ENCODE measurements at regions of chr11 and their contacts with region 1.

Region 1: GRCh38 chr11:133927690-133928627 is 28.8 kb downstream of the IGSF9B start:
- DNase-seq: peak; percentile 80
- H3K4me3 Mint-ChIP-seq: peak overlapping the region; percentile 49
- H3K27ac Mint-ChIP-seq: peak overlapping the region; percentile 77
- H3K4me1 Mint-ChIP-seq: peaks cover 31% of the 10 kb centered on the region
- H3K27me3 Mint-ChIP-seq: no peaks in the 10 kb centered on the region

Region 2: GRCh38 chr11:133834682-133835592 is 93.0 kb before region 1 on chr11:
- CTCF ChIA-PET with region 1: no interaction called
- POLR2A ChIA-PET with region 1: no interaction called
- intact Hi-C with region 1: no loop called
- DNase-seq: peak; percentile 68
- H3K4me3 Mint-ChIP-seq: no peak overlapping the region
- H3K27ac Mint-ChIP-seq: no peak overlapping the region
- H3K4me1 Mint-ChIP-seq: peaks cover 10% of the 10 kb centered on the region
- H3K27me3 Mint-ChIP-seq: peaks cover 2% of the 10 kb centered on the region

Region 3: DNA sequence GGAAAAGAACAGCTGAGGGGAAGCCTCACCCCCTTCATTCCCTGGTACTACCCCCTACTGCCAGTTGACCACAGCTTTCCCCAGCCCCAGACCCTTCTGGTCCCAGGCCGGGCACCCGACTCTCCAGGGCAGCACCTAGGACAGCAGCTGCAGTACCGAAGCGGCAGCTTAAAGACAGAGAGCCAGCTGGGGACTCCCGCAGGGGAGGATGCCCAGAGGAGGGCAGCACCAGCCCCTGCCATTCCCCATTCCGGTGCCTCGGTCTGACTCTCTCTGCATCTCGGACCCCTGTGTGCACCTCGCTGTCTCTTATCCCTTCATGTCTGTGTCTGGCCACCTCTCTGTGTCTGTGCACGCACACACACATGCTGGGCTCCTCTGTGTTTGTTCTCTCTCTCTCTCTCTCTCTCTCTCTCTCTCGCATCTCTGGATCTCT is 19.4 kb after region 1 on chr11:
- CTCF ChIA-PET with region 1: interaction called, 70 read pairs
- POLR2A ChIA-PET with region 1: interaction called, 14 read pairs
- intact Hi-C with region 1: loop called (anchors 1 kb)
- DNase-seq: peak; percentile 83
- H3K4me3 Mint-ChIP-seq: peak overlapping the region; percentile 33
- H3K27ac Mint-ChIP-seq: peak overlapping the region; percentile 42
- H3K4me1 Mint-ChIP-seq: peaks cover 67% of the 10 kb centered on the region
- H3K27me3 Mint-ChIP-seq: no peaks in the 10 kb centered on the region

Region 4: DNA sequence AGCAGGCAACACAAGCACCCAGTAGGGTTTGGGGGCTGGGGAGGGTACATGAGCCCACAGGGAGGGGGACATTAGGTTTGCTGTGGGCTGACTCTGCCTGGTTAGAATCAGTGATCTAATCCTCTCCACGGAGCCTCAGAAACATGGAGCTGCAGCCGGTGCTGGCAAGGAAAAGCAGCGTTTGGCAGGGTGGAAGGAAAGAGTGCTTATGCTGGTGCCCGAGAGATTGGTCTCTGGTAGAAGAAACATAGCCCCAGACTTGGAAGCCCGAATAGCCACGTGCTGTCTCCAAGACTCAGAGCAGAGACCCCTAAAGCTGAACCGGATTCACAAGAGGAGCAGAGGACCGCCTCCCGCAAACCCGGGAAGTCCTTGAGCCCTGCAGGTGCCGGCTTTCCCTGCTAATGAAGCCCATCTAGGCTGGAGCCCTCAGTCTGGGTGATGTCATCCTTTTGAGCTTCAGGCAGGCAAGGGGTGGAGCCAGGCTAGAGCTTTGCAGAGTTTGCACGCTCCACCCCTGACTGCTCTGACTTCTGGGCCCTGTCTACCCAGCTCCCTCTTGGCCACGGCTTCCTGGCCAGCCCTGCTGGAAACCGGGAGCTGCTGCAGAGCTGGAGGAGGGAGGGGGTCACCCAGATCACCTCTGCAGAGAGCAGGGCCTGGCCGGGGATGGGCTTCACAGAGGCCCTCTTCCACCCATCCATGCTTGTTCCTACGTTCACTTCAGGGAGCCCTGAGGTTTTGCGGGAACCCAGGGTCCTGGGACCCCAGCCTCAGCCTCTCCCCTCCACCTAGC is 105.9 kb after region 1 on chr11:
- CTCF ChIA-PET with region 1: interaction called, 13 read pairs
- POLR2A ChIA-PET with region 1: no interaction called
- intact Hi-C with region 1: loop called (anchors 1 kb)
- DNase-seq: peak; percentile 77
- H3K4me3 Mint-ChIP-seq: peak overlapping the region; percentile 16
- H3K27ac Mint-ChIP-seq: no peak overlapping the region
- H3K4me1 Mint-ChIP-seq: peaks cover 46% of the 10 kb centered on the region
- H3K27me3 Mint-ChIP-seq: no peaks in the 10 kb centered on the region

Region 5: GRCh38 chr11:134098566-134099184 is 170.7 kb after region 1 on chr11:
- CTCF ChIA-PET with region 1: interaction called, 11 read pairs
- POLR2A ChIA-PET with region 1: no interaction called
- intact Hi-C with region 1: no loop called
- DNase-seq: no peak
- H3K4me3 Mint-ChIP-seq: no peak overlapping the region
- H3K27ac Mint-ChIP-seq: no peak overlapping the region
- H3K4me1 Mint-ChIP-seq: no peaks in the 10 kb centered on the region
- H3K27me3 Mint-ChIP-seq: peaks cover 1% of the 10 kb centered on the region

Region 6: DNA sequence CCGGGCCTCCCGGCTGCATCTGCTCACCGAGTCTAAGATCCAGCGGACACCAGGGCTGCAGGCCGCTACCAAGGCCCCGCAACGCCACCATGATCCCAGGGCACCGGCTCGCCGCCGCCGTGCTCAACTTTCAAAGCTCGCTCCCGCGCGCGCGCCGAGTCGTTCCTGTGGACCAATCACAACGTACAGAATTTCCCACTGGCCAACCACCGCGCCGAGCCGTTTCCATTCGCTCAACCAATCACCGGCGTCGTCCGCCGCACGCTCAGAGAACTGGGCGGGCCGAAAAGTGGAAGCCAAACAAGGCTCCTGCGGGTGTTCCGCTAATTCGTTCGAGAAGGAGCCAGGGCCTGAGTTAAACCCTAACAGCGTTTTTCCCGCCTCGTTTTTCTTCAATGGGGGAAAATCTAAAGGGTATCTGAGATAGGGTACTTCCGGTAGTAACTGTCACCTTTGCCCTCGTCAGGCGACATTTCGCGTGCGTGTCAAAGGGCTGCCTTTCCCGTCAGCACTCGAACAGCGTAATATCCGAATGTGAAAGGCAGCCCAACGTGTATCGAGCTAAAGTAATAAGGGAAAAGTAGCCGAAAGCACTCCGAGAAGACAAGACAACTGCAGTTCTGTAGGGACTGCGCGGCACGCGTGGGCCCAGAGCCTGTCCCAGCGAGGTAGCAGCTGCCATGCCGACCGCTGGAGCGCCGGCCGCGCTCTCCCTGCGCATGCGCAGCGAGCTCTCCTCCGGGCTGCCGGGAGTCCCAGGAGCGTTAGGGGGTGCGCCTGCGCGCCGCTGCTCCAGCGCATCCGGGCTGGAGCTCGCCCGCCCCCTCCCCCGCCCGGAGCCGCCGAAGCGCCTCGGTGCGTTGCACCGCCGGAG is 296.1 kb after region 1 on chr11 and contains the starts of genes NCAPD3 and VPS26B:
- CTCF ChIA-PET with region 1: interaction called, 6 read pairs
- POLR2A ChIA-PET with region 1: no interaction called
- intact Hi-C with region 1: loop called (anchors 1 kb)
- DNase-seq: peak; percentile 98
- H3K4me3 Mint-ChIP-seq: peak within 1 kb of the TSS; percentile 98
- H3K27ac Mint-ChIP-seq: peak within 1 kb of the TSS; percentile 97
- H3K4me1 Mint-ChIP-seq: peaks cover 54% of the 10 kb centered on the region
- H3K27me3 Mint-ChIP-seq: no peaks in the 10 kb centered on the region
- total RNA-seq, gene NCAPD3: 94.6 to 101 TPM
- total RNA-seq, gene VPS26B: 36.2 to 38.8 TPM

Region 7: DNA sequence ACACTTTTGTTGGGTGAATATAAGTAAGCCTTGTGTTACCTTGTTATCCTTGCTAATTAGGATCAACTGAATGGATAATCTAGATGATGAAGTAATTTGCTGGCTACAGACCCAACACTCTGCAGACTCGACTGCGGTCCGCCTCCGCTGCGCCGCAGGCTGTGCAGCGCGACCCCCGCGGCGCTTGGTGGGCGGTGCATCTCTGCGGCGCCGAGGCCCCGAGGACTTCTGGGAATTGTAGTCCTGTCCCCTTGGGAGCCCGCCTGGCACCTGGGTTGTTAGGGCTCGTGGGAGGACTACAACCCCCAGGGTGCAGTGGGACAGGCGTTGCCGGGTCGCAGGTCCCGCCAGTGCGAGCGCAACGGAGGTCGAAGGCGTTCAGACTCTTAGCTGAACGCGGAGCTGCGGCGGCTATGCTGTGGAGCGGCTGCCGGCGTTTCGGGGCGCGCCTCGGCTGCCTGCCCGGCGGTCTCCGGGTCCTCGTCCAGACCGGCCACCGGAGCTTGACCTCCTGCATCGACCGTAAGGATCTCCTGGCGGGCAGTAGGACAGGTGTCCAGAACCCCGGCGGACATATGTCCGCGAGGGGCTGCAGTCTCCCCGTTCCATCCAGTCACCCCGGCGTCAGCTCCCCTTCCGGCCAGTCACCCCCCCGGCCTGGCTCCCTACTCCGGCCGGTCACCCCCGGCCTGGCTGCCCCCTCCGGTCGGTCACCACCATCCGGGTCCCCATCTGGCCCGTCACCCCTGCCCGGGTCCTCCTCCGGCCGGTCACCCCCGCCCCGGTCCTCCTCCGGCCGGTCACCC is 325.4 kb after region 1 on chr11 and contains the starts of genes ACAD8 and THYN1:
- CTCF ChIA-PET with region 1: interaction called, 3 read pairs
- POLR2A ChIA-PET with region 1: interaction called, 3 read pairs
- intact Hi-C with region 1: loop called (anchors 1 kb)
- DNase-seq: peak; percentile 97
- H3K4me3 Mint-ChIP-seq: peak within 1 kb of the TSS; percentile 89
- H3K27ac Mint-ChIP-seq: peak within 1 kb of the TSS; percentile 89
- H3K4me1 Mint-ChIP-seq: peaks cover 40% of the 10 kb centered on the region
- H3K27me3 Mint-ChIP-seq: no peaks in the 10 kb centered on the region
- total RNA-seq, gene ACAD8: 20.9 to 22.1 TPM
- total RNA-seq, gene THYN1: 74.0 to 74.3 TPM

Measured in activated CD4-positive, alpha-beta memory T cell treated with anti-CD3 and anti-CD28 coated beads for 36 hours (primary cell).